Transverse colon (tissue), 4 donors: ENCODE measurements at regions of chr13 and their contacts with region 1.

Region 1: GRCh38 chr13:43085545-43085944 is 62.2 kb downstream of the DNAJC15 start:
- DNase-seq: no peak
- H3K4me3 ChIP-seq: no peak overlapping the region
- H3K27ac ChIP-seq: no peak overlapping the region
- H3K4me1 ChIP-seq: peaks cover 0 to 14% (median 4%) of the 10 kb centered on the region in 4 donors
- H3K27me3 ChIP-seq: no peaks in the 10 kb centered on the region
- CTCF ChIP-seq: peak; percentile 67 to 70 (median 68)
- EP300 ChIP-seq: no peak
- POLR2A ChIP-seq: no peak

Region 2: DNA sequence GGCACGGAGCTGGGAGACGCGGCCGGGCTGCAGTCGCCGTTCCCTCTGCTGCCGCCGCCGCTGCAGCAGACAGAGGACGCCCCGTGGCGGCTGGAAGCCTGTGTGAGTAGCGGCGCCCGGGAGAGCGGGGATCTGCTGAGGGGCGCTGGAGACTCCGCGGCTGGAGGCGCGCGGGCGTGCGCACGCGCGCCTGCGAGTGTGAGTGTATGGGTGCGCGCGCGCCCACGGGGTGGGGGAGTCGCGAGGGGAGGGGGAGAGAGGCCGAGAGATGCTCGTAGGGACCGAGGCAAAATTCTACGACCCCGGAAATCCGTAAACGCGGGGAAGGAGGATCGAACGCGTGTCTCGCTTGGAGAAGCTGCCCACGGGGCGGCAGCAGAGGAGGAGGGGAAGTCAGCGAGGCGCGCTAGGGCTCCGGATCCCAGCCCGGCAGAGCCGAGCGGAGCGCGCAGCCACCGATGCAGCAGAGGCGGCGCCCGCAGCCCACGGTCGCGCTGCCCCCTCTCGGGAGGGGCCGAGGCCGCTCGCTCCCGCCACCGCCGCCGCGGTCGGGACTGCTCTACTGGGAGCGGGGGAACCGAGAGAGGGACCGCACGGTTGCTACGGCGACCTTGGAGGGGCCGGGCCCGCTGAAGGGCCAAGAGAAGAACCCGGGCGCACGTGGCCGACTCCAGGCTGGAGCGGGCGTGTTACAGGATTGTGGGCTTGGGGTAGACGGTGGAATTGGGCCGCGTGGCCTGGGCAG is 701.4 kb after region 1 on chr13 and contains the start of gene ENOX1:
- in situ Hi-C with region 1: loop called (anchors 25 kb)
- intact Hi-C with region 1: no loop called
- DNase-seq: peak; percentile 38
- H3K4me3 ChIP-seq: peak within 1 kb of the TSS; percentile 49 to 81 (median 64)
- H3K27ac ChIP-seq: peak within 1 kb of the TSS; percentile 80 to 92 (median 85)
- H3K4me1 ChIP-seq: peaks cover 0 to 29% (median 21%) of the 10 kb centered on the region in 4 donors
- H3K27me3 ChIP-seq: peaks cover 41% of the 10 kb centered on the region
- CTCF ChIP-seq: peak in 1 of 5 experiments; percentile 15
- EP300 ChIP-seq: no peak
- POLR2A ChIP-seq: no peak
- total RNA-seq, gene ENOX1: 1.5 to 6.4 (median 2.2) TPM

Region 3: GRCh38 chr13:43804461-43805070 is 719.0 kb after region 1 on chr13:
- in situ Hi-C with region 1: loop called (anchors 25 kb)
- intact Hi-C with region 1: loop called (anchors 10 kb)
- DNase-seq: no peak
- H3K4me3 ChIP-seq: no peak overlapping the region
- H3K27ac ChIP-seq: peak overlapping the region in 3 of 4 donors; percentile 19 to 42 (median 19)
- H3K4me1 ChIP-seq: no peaks in the 10 kb centered on the region
- H3K27me3 ChIP-seq: no peaks in the 10 kb centered on the region
- CTCF ChIP-seq: peak; percentile 44 to 65 (median 61)
- EP300 ChIP-seq: no peak
- POLR2A ChIP-seq: no peak